ENCODE measurements at regions of chr12 and their contacts with region 1.

Region 1: GRCh38 chr12:54207484-54208294 is 18.9 kb upstream of the SMUG1 start:
- DNase-seq: peak; percentile 66 to 76 (median 68)
- ATAC-seq: peak; percentile 84 to 92 (median 90)
- H3K4me3 ChIP-seq: no peak overlapping the region
- H3K27ac ChIP-seq: no peak overlapping the region
- H3K4me1 ChIP-seq: no peaks in the 10 kb centered on the region
- H3K27me3 ChIP-seq: no peaks in the 10 kb centered on the region
- CTCF ChIP-seq: peak; percentile 80 to 88 (median 86)
- POLR2A ChIP-seq: no peak

Region 2: GRCh38 chr12:54005853-54006686 is 201.6 kb before region 1 on chr12:
- intact Hi-C with region 1: loop called (anchors 5 kb)
- DNase-seq: peak; percentile 86 to 89 (median 88)
- ATAC-seq: peak; percentile 92 to 97 (median 95)
- H3K4me3 ChIP-seq: peak overlapping the region in 1 of 3 donors; percentile 11
- H3K27ac ChIP-seq: no peak overlapping the region
- H3K4me1 ChIP-seq: peaks cover 0 to 7% (median 0%) of the 10 kb centered on the region in 4 donors
- H3K27me3 ChIP-seq: peaks cover 0 to 41% of the 10 kb centered on the region in 2 donors
- CTCF ChIP-seq: peak; percentile 95 to 97 (median 95)
- POLR2A ChIP-seq: no peak

Region 3: GRCh38 chr12:54032627-54033100 is 175.0 kb before region 1 on chr12 and contains the start of gene HOXC5:
- intact Hi-C with region 1: loop called in 1 of 2 experiments (anchors 10 kb)
- DNase-seq: no peak
- ATAC-seq: peak; percentile 61 to 87 (median 80)
- H3K4me3 ChIP-seq: no peak within 1 kb of the TSS
- H3K27ac ChIP-seq: no peak within 1 kb of the TSS
- H3K4me1 ChIP-seq: peaks cover 0 to 5% (median 0%) of the 10 kb centered on the region in 4 donors
- H3K27me3 ChIP-seq: peaks cover 12 to 55% of the 10 kb centered on the region in 2 donors
- CTCF ChIP-seq: peak; percentile 59 to 89 (median 80)
- POLR2A ChIP-seq: no peak
- total RNA-seq, gene HOXC5: not detected